GM12878 (cell line): ENCODE measurements at regions of chr2 and their contacts with region 1.

Region 1: GRCh38 chr2:102615622-102616436 is 3.5 kb upstream of the SLC9A2 start:
- DNase-seq: no peak
- ATAC-seq: peak; percentile 91
- H3K4me3 ChIP-seq: no peak overlapping the region
- H3K27ac ChIP-seq: no peak overlapping the region
- H3K4me1 ChIP-seq: no peaks in the 10 kb centered on the region
- H3K27me3 ChIP-seq: peaks cover 6 to 12% of the 10 kb centered on the region in 2 experiments
- CTCF ChIP-seq: peak; percentile 91 to 95 (median 93)
- EP300 ChIP-seq: no peak
- POLR2A ChIP-seq: no peak
- RAD21 ChIP-seq: peak; percentile 72

Region 2: DNA sequence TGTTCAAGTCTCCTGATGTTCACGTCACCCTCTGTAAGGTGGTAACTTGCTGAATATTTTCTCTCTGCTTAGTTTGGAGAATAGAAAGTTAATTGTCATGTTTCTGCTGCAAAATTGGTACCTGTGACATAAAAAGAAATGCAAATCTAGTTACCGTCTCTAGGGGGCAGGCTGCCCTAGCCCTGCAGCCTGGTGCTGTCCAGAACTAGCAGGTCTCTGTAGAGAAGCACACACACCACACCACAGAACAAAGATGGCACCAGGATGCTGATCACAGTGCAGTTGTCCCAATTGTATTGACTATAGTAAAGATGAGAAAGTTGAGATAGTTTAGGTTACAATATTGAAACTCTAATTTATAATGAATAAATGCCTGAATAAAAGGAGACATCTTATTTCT is 95.8 kb before region 1 on chr2:
- CTCF ChIA-PET with region 1: interaction called, 16 read pairs
- POLR2A ChIA-PET with region 1: no interaction called
- RAD21 ChIA-PET with region 1: interaction called, 9 read pairs
- SMC1A ChIA-PET with region 1: interaction called, 10 read pairs
- in situ Hi-C with region 1: no loop called
- intact Hi-C with region 1: loop called (anchors 1 kb)
- DNase-seq: no peak
- ATAC-seq: peak; percentile 88
- H3K4me3 ChIP-seq: no peak overlapping the region
- H3K27ac ChIP-seq: no peak overlapping the region
- H3K4me1 ChIP-seq: no peaks in the 10 kb centered on the region; the same call in 1 of the 2 replicates
- H3K27me3 ChIP-seq: peaks cover 0 to under 1% of the 10 kb centered on the region in 2 experiments; a peak in 1 of 4 replicates
- CTCF ChIP-seq: peak; percentile 68 to 73 (median 72)
- EP300 ChIP-seq: no peak
- POLR2A ChIP-seq: no peak
- RAD21 ChIP-seq: peak; percentile 71

Region 3: DNA sequence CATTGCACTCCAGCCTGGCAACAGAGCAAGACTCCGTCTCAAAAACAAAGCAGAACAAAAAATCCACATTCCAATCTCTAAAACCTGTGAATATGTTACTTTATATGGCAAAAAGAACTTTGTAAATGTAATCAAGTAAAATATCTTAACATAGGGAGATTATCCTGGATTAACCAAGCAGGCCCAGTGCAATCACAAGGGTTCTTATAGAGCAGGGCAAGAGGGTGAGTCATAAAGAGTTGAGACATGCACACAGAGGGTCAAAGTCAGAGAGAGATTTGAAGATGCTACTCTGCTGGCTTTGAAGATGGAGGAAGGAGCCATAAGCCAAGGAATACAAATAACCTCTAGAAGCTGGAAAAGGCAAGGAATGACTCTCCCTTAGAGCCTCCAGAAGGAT is 57.4 kb before region 1 on chr2:
- CTCF ChIA-PET with region 1: no interaction called
- POLR2A ChIA-PET with region 1: no interaction called
- RAD21 ChIA-PET with region 1: no interaction called
- SMC1A ChIA-PET with region 1: no interaction called
- in situ Hi-C with region 1: no loop called
- intact Hi-C with region 1: no loop called
- DNase-seq: no peak
- ATAC-seq: no peak
- H3K4me3 ChIP-seq: no peak overlapping the region
- H3K27ac ChIP-seq: no peak overlapping the region
- H3K4me1 ChIP-seq: no peaks in the 10 kb centered on the region
- H3K27me3 ChIP-seq: no peaks in the 10 kb centered on the region
- CTCF ChIP-seq: no peak
- EP300 ChIP-seq: no peak
- POLR2A ChIP-seq: no peak
- RAD21 ChIP-seq: no peak

Region 4: DNA sequence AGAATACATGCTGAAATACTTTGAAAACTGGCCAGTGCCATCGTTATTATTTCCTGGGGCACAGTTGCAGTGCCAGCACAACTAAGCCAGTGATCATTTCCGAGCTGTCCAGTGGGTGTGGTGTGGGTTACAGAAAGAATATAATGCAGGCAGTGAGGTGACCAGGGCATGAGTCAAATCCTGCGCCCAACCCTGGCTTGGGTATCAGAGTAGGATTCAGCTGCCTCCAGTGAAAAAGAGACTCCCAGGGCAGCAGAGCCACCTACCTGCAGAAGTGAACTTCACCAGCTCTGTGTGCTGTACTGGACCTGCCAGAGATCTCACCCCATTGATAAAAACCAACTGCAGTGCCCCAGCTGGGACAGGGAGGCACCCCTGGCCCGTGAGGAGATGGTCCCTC is 21.5 kb after region 1 on chr2:
- CTCF ChIA-PET with region 1: interaction called, 65 read pairs
- POLR2A ChIA-PET with region 1: interaction called, 3 read pairs
- RAD21 ChIA-PET with region 1: interaction called, 8 read pairs
- SMC1A ChIA-PET with region 1: interaction called, 5 read pairs
- in situ Hi-C with region 1: no loop called
- intact Hi-C with region 1: no loop called
- DNase-seq: no peak
- ATAC-seq: peak; percentile 55
- H3K4me3 ChIP-seq: no peak overlapping the region
- H3K27ac ChIP-seq: no peak overlapping the region
- H3K4me1 ChIP-seq: no peaks in the 10 kb centered on the region
- H3K27me3 ChIP-seq: no peaks in the 10 kb centered on the region; a peak in 1 of 4 replicates
- CTCF ChIP-seq: no peak
- EP300 ChIP-seq: no peak
- POLR2A ChIP-seq: no peak
- RAD21 ChIP-seq: no peak

Region 5: GRCh38 chr2:102703748-102704147 is 87.9 kb after region 1 on chr2:
- CTCF ChIA-PET with region 1: interaction called, 15 read pairs
- POLR2A ChIA-PET with region 1: no interaction called
- RAD21 ChIA-PET with region 1: interaction called, 14 read pairs
- SMC1A ChIA-PET with region 1: interaction called, 20 read pairs
- in situ Hi-C with region 1: no loop called
- intact Hi-C with region 1: loop called (anchors 2 kb)
- DNase-seq: no peak
- ATAC-seq: peak; percentile 77
- H3K4me3 ChIP-seq: no peak overlapping the region
- H3K27ac ChIP-seq: no peak overlapping the region
- H3K4me1 ChIP-seq: no peaks in the 10 kb centered on the region
- H3K27me3 ChIP-seq: no peaks in the 10 kb centered on the region
- CTCF ChIP-seq: peak; percentile 20 to 53 (median 30); a peak in 3 of 6 replicates
- EP300 ChIP-seq: no peak
- POLR2A ChIP-seq: no peak
- RAD21 ChIP-seq: peak; percentile 59

Region 6: GRCh38 chr2:102806250-102806837 is 190.5 kb after region 1 on chr2:
- CTCF ChIA-PET with region 1: interaction called, 5 read pairs
- POLR2A ChIA-PET with region 1: no interaction called
- RAD21 ChIA-PET with region 1: interaction called, 4 read pairs
- SMC1A ChIA-PET with region 1: no interaction called
- in situ Hi-C with region 1: no loop called
- intact Hi-C with region 1: loop called (anchors 10 kb)
- DNase-seq: no peak
- ATAC-seq: peak; percentile 83
- H3K4me3 ChIP-seq: no peak overlapping the region
- H3K27ac ChIP-seq: no peak overlapping the region
- H3K4me1 ChIP-seq: peaks cover 3% of the 10 kb centered on the region
- H3K27me3 ChIP-seq: no peaks in the 10 kb centered on the region
- CTCF ChIP-seq: peak; percentile 85 to 90 (median 86)
- EP300 ChIP-seq: no peak
- POLR2A ChIP-seq: no peak
- RAD21 ChIP-seq: peak; percentile 77